K562 (cell line): ENCODE measurements at regions of chr10 and their contacts with region 1.

Region 1: GRCh38 chr10:9331583-9332008 is 1277.1 kb downstream of the GATA3 start:
- DNase-seq: peak; percentile 35 to 53 (median 40)
- ATAC-seq: peak; percentile 77
- H3K4me3 ChIP-seq: no peak overlapping the region
- H3K27ac ChIP-seq: no peak overlapping the region
- H3K4me1 ChIP-seq: no peaks in the 10 kb centered on the region
- H3K27me3 ChIP-seq: no peaks in the 10 kb centered on the region
- CTCF ChIP-seq: peak; percentile 29 to 81 (median 47); a peak in 4 of 6 replicates
- EP300 ChIP-seq: no peak
- POLR2A ChIP-seq: no peak
- RAD21 ChIP-seq: peak; percentile 76 to 91

Region 2: GRCh38 chr10:11036407-11037011 is 1704.9 kb after region 1 on chr10:
- CTCF ChIA-PET with region 1: no interaction called
- POLR2A ChIA-PET with region 1: no interaction called
- in situ Hi-C with region 1: loop called (anchors 25 kb)
- intact Hi-C with region 1: loop called (anchors 5 kb)
- DNase-seq: peak; percentile 22 to 35 (median 32)
- ATAC-seq: peak; percentile 37; the same call in 1 of the 3 replicates
- H3K4me3 ChIP-seq: no peak overlapping the region
- H3K27ac ChIP-seq: no peak overlapping the region
- H3K4me1 ChIP-seq: no peaks in the 10 kb centered on the region
- H3K27me3 ChIP-seq: no peaks in the 10 kb centered on the region
- CTCF ChIP-seq: peak in 2 of 3 experiments; percentile 34 to 44; a peak in 3 of 6 replicates
- EP300 ChIP-seq: no peak
- POLR2A ChIP-seq: no peak
- RAD21 ChIP-seq: peak; percentile 16 to 61; a peak in 2 of 4 replicates

Region 3: DNA sequence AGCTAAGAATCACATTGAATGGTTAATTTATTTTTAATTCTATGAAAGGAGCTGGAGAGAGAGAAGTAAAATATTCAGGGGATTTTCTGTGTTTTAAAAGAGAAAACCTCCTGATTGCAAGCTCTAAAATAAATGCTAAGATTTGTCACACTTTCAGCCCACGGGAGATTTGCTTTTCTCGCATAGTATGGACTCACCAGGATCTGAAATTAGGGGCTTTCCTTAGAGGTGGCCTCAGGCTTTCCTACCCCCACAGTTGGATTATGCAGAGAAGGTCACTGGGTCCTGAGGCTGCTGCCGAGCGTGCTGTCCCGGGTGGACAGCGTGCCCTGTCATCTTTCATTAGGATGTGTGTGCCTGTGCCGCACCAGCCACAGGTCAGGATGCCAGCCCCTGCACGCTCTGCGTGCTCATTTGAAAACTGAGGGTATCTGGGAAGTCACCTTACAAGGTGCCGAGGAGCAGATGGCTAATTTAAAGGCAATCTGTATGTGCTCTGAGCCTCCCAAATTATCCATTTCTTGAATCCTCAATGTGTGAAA is 1944.9 kb after region 1 on chr10:
- CTCF ChIA-PET with region 1: no interaction called
- POLR2A ChIA-PET with region 1: no interaction called
- in situ Hi-C with region 1: no loop called
- intact Hi-C with region 1: loop called (anchors 5 kb)
- DNase-seq: no peak
- ATAC-seq: no peak
- H3K4me3 ChIP-seq: no peak overlapping the region
- H3K27ac ChIP-seq: no peak overlapping the region
- H3K4me1 ChIP-seq: no peaks in the 10 kb centered on the region
- H3K27me3 ChIP-seq: no peaks in the 10 kb centered on the region; a peak in 1 of 5 replicates
- CTCF ChIP-seq: no peak
- EP300 ChIP-seq: no peak
- POLR2A ChIP-seq: no peak
- RAD21 ChIP-seq: no peak